ENCODE measurements at regions of chrX and their contacts with region 1.

Region 1: GRCh38 chrX:41275661-41276609 is 58.0 kb upstream of the DDX3X start:
- DNase-seq: peak in 8 of 9 experiments; percentile 22 to 74 (median 54)
- ATAC-seq: peak; percentile 68
- H3K4me3 ChIP-seq: peak overlapping the region; percentile 52 to 57
- H3K4me3 Mint-ChIP-seq: peak overlapping the region; percentile 80
- H3K27ac ChIP-seq: peak overlapping the region in 1 of 2 experiments; percentile 25
- H3K27ac Mint-ChIP-seq: peak overlapping the region; percentile 37
- H3K4me1 ChIP-seq: no peaks in the 10 kb centered on the region
- H3K4me1 Mint-ChIP-seq: peaks cover 7% of the 10 kb centered on the region
- H3K27me3 ChIP-seq: no peaks in the 10 kb centered on the region
- H3K27me3 Mint-ChIP-seq: no peaks in the 10 kb centered on the region
- CTCF ChIP-seq: peak; percentile 33

Region 2: DNA sequence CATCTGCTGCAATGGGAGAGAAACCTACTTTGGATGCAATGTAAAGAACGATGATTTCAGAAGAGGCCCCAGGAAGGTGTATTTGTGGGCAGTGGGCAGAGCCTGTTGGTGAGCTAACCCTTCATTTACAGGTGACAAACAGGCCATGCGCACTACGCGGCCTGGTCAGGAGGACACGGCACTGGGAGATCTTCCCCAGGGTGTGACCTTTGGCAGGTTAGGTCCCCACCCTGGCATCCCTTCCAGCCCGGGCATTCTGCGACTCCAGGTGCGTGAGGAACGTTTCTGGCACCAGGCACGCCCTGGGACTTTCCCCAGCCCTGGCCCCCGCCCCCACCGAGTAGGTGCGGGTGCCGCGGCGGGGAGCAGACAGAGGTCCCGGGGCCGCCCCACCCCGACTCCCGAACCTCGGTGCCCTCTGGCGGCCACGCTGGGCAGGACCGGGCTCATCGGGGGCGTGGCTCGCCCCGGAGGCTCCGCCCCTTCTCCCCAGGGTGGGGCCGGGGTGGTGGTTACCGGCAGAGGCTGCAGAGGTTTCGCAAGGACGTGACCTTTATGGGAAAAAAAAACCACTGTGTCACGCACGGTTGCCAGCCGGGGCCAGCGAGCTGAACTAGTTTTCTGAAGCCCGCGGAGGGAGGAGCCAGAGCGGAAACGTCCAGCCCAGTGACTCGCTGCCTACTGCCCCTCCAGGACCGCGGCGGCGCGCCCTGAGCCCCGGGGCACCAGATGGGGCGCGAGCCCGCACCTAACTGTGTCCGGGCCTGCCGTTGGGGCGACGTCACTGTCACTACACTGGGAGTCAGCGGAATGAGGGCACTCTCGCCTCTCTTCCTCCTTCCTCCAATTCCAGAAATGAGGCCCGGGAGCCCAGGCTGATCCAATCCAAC is 166.2 kb after region 1 on chrX:
- CTCF ChIA-PET with region 1: no interaction called
- POLR2A ChIA-PET with region 1: no interaction called
- intact Hi-C with region 1: loop called (anchors 1 kb)
- DNase-seq: peak; percentile 73 to 91 (median 81)
- ATAC-seq: peak; percentile 97
- H3K4me3 ChIP-seq: peak overlapping the region; percentile 49 to 51
- H3K4me3 Mint-ChIP-seq: peak overlapping the region; percentile 61
- H3K27ac ChIP-seq: no peak overlapping the region
- H3K27ac Mint-ChIP-seq: peak overlapping the region; percentile 60
- H3K4me1 ChIP-seq: peaks cover 6% of the 10 kb centered on the region
- H3K4me1 Mint-ChIP-seq: peaks cover 5% of the 10 kb centered on the region
- H3K27me3 ChIP-seq: no peaks in the 10 kb centered on the region
- H3K27me3 Mint-ChIP-seq: no peaks in the 10 kb centered on the region
- CTCF ChIP-seq: peak; percentile 59

Region 3: DNA sequence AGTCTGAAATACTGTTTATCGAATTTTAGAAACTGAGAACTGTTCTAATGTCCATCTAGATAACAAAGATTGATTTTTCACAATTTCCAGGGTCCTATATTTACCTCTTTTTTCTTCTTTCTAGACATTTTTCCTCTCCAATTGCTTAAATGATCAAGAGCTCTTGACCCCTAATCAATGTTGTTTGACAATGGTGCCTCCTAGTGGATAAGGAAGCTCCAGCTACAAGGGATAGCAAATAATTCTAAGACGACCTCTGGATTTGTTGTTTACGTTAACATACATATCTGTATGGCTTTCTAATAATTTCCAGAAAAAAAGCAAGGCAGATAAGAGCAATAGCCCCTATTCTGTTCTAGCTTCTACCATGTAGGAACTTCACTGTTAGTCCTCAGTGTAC is 483.9 kb after region 1 on chrX:
- CTCF ChIA-PET with region 1: no interaction called
- POLR2A ChIA-PET with region 1: no interaction called
- intact Hi-C with region 1: loop called in 1 of 2 experiments (anchors 5 kb)
- DNase-seq: peak in 2 of 9 experiments; percentile 39 to 54
- ATAC-seq: no peak
- H3K4me3 ChIP-seq: no peak overlapping the region
- H3K4me3 Mint-ChIP-seq: no peak overlapping the region
- H3K27ac ChIP-seq: no peak overlapping the region
- H3K27ac Mint-ChIP-seq: no peak overlapping the region
- H3K4me1 ChIP-seq: no peaks in the 10 kb centered on the region
- H3K4me1 Mint-ChIP-seq: peaks cover 26% of the 10 kb centered on the region
- H3K27me3 ChIP-seq: no peaks in the 10 kb centered on the region
- H3K27me3 Mint-ChIP-seq: no peaks in the 10 kb centered on the region
- CTCF ChIP-seq: peak; percentile 36

Measured in CD8-positive, alpha-beta T cell (primary cell).